ENCODE measurements at regions of chr7 and their contacts with region 1.

Region 1: GRCh38 chr7:25093268-25093826 is 31.7 kb downstream of the CYCS start:
- DNase-seq: peak; percentile 78 to 92
- H3K4me3 ChIP-seq: peak overlapping the region; percentile 40
- H3K27ac ChIP-seq: no peak overlapping the region
- H3K4me1 ChIP-seq: peaks cover 16% of the 10 kb centered on the region; the same call in 1 of the 2 replicates
- H3K27me3 ChIP-seq: no peaks in the 10 kb centered on the region
- CTCF ChIP-seq: peak; percentile 97

Region 2: GRCh38 chr7:24477398-24478136 is 615.8 kb before region 1 on chr7:
- CTCF ChIA-PET with region 1: no interaction called
- POLR2A ChIA-PET with region 1: no interaction called
- intact Hi-C with region 1: loop called (anchors 10 kb)
- DNase-seq: peak; percentile 37 to 76
- H3K4me3 ChIP-seq: peak overlapping the region; percentile 3; the same call in 1 of the 2 replicates
- H3K27ac ChIP-seq: peak overlapping the region; percentile 61
- H3K4me1 ChIP-seq: peaks cover 19% of the 10 kb centered on the region
- H3K27me3 ChIP-seq: no peaks in the 10 kb centered on the region
- CTCF ChIP-seq: no peak

Region 3: GRCh38 chr7:24701261-24702235 is 391.8 kb before region 1 on chr7:
- CTCF ChIA-PET with region 1: interaction called, 3 read pairs
- POLR2A ChIA-PET with region 1: no interaction called
- intact Hi-C with region 1: loop called (anchors 10 kb)
- DNase-seq: peak; percentile 80 to 90
- H3K4me3 ChIP-seq: no peak overlapping the region
- H3K27ac ChIP-seq: no peak overlapping the region
- H3K4me1 ChIP-seq: peaks cover 12% of the 10 kb centered on the region
- H3K27me3 ChIP-seq: no peaks in the 10 kb centered on the region
- CTCF ChIP-seq: no peak

Region 4: DNA sequence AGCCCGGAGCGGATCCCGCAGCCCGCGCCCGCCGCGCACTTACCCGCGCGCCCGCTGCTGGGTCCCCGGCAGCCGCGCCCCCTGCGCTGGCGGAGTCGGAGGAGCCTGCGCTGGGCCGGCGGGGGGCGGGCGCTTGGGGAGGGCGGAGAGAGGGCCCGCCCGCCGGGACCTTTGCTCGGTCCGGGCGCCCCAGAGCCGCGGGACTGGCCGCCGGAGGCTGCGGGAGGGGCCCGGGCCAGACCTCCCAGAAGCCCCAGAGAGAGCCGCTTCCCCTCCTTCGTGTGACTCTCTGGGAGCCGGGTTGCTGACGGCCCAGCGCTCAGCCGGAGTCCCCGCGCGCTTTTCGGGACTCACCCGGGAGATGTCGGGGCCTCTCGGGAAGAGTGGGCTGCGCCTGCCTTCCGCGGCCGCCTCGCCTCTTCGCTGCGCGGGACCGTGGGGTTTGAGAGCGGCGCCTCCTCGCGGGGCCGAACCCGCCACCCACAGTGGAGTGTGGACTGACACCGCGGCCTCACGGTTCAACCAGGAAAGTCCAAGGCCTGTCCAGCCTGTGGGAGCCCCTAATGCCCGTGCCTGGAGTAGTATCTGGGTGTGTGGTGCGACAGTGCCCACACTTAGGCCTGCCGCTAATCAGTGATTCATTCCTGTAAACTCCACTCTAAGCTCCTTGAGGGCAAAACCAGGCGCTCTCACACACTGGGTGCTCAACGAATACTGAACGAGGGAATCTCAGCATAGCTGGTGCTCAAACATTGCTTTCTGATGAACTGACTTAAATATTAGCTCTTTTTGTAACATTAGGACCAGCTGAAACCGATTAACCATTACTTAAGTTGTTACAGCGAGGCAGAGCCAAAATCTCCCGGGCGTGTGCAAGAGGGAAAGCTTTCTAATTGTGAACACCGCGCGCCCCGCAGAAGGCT is 335.7 kb before region 1 on chr7 and contains the start of gene GSDME:
- CTCF ChIA-PET with region 1: no interaction called
- POLR2A ChIA-PET with region 1: no interaction called
- intact Hi-C with region 1: loop called (anchors 2 kb)
- DNase-seq: peak; percentile 56 to 74
- H3K4me3 ChIP-seq: peak within 1 kb of the TSS; percentile 88
- H3K27ac ChIP-seq: no peak within 1 kb of the TSS
- H3K4me1 ChIP-seq: peaks cover 8% of the 10 kb centered on the region
- H3K27me3 ChIP-seq: no peaks in the 10 kb centered on the region
- CTCF ChIP-seq: no peak
- total RNA-seq, gene GSDME: 11.5 and 15.1 TPM in 2 replicates

Region 5: GRCh38 chr7:24819916-24820689 is 273.2 kb before region 1 on chr7:
- CTCF ChIA-PET with region 1: interaction called, 15 read pairs
- POLR2A ChIA-PET with region 1: interaction called, 4 read pairs
- intact Hi-C with region 1: loop called (anchors 1 kb)
- DNase-seq: peak; percentile 77 to 81
- H3K4me3 ChIP-seq: peak overlapping the region; percentile 22; the same call in 1 of the 2 replicates
- H3K27ac ChIP-seq: peak overlapping the region; percentile 97
- H3K4me1 ChIP-seq: peaks cover 47% of the 10 kb centered on the region
- H3K27me3 ChIP-seq: no peaks in the 10 kb centered on the region
- CTCF ChIP-seq: peak; percentile 99

Region 6: DNA sequence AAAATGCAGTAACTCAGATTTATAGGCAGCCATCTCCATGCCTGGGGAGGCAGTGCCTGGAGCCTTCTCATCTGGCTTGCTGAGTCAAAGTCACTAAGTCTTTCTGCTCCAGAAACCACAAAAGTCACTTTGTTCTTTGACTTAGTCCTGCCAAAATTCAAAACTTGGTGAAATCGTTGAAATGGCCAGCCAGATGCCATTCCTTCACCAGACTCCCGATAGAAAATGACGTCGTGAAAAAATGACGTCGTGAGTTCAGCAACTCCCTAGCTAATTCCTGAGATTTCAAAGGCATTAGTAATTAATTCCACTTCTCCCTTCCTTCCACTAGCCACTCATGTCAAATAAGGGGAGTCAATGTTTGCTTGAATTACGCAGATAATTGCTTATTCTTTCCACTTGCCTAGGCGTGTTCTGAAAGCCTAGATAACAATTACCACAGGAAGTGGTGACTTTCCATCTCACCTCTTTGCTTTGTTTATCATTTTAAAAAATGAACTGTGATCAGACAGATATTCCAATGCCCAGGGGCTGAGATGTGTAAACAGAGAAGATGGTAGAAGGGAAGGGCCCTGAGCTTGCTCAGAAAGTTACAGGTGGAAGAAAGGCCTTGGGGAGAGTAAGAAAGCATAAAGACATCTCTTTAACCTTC is 64.9 kb before region 1 on chr7:
- CTCF ChIA-PET with region 1: interaction called, 3 read pairs
- POLR2A ChIA-PET with region 1: interaction called, 3 read pairs
- intact Hi-C with region 1: loop called (anchors 1 kb)
- DNase-seq: peak; percentile 66 to 99
- H3K4me3 ChIP-seq: peak overlapping the region; percentile 2; the same call in 1 of the 2 replicates
- H3K27ac ChIP-seq: peak overlapping the region; percentile 87
- H3K4me1 ChIP-seq: peaks cover 88% of the 10 kb centered on the region
- H3K27me3 ChIP-seq: no peaks in the 10 kb centered on the region
- CTCF ChIP-seq: no peak

Region 7: GRCh38 chr7:25125137-25125946 is 32.0 kb after region 1 on chr7 and contains the start of gene CYCS:
- CTCF ChIA-PET with region 1: interaction called, 14 read pairs
- POLR2A ChIA-PET with region 1: no interaction called
- intact Hi-C with region 1: no loop called
- DNase-seq: peak; percentile 100
- H3K4me3 ChIP-seq: peak within 1 kb of the TSS; percentile 66
- H3K27ac ChIP-seq: peak within 1 kb of the TSS; percentile 66
- H3K4me1 ChIP-seq: peaks cover 21% of the 10 kb centered on the region; the same call in 1 of the 2 replicates
- H3K27me3 ChIP-seq: peaks cover 21% of the 10 kb centered on the region
- CTCF ChIP-seq: no peak
- total RNA-seq, gene CYCS: 101 and 120 TPM in 2 replicates